Heart left ventricle (tissue), 16 donors: ENCODE measurements at regions of chr1 and their contacts with region 1.

Region 1: GRCh38 chr1:42335050-42335808 is at the start of gene FOXJ3:
- DNase-seq: peak; percentile 94 to 97 (median 95)
- ATAC-seq: peak; percentile 74 to 96 (median 91)
- H3K4me3 ChIP-seq: peak within 1 kb of the TSS; percentile 72 to 99 (median 94)
- H3K27ac ChIP-seq: peak within 1 kb of the TSS; percentile 83 to 98 (median 95)
- H3K4me1 ChIP-seq: peaks cover 3 to 57% (median 30%) of the 10 kb centered on the region in 12 donors
- H3K27me3 ChIP-seq: no peaks in the 10 kb centered on the region
- CTCF ChIP-seq: no peak
- POLR2A ChIP-seq: peak in 1 of 2 donors; percentile 61
- total RNA-seq, gene FOXJ3: 33.4 to 48.8 (median 42.3) TPM

Region 2: DNA sequence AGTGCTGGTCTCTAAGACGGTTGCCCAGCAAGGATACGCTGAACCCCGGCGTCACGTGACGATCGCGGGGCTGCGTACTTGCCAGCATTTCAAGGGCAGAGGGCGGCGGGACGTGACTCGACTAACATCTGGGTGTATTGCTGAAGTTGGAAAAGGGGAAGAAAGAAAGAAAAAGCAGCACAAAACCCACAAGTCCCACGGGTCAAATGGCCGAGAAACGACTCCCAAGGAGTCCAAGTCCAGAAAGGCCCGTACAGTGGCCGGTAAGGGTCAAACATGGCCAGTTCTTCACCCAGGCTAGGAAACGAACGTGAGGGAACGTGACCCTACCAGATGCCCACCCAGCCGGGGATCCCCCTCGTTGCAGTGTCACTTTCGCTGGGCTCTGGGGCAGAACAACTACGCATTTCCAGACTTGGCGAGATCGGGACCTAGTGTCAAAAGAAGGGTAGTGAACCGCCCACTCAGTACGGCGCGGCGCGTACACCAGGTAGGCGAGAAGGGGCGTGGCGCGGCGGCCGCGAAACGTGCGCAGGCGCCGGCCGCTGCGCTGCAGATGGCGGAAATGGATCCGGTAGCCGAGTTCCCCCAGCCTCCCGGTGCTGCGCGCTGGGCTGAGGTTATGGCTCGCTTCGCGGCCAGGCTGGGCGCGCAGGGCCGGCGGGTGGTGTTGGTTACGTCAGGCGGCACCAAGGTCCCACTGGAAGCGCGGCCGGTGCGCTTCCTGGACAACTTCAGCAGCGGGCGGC is 121.0 kb after region 1 on chr1 and contains the starts of genes PPCS and ZMYND12:
- intact Hi-C with region 1: loop called in 7 of 10 experiments (anchors 2 to 10 kb)
- DNase-seq: peak; percentile 88 to 92 (median 91)
- ATAC-seq: peak; percentile 94 to 97 (median 96)
- H3K4me3 ChIP-seq: peak within 1 kb of the TSS; percentile 63 to 100 (median 84)
- H3K27ac ChIP-seq: peak within 1 kb of the TSS; percentile 83 to 99 (median 90)
- H3K4me1 ChIP-seq: peaks cover 0 to 25% (median 15%) of the 10 kb centered on the region in 12 donors
- H3K27me3 ChIP-seq: no peaks in the 10 kb centered on the region
- CTCF ChIP-seq: peak in 2 of 12 donors; percentile 5 to 13
- POLR2A ChIP-seq: peak in 1 of 2 donors; percentile 58
- total RNA-seq, gene PPCS: 34.3 to 47.5 (median 37.0) TPM
- total RNA-seq, gene ZMYND12: 0.49 to 3.5 (median 2.3) TPM

Region 3: GRCh38 chr1:42681741-42682483 is 346.7 kb after region 1 on chr1 and contains the start of gene YBX1:
- intact Hi-C with region 1: loop called in 4 of 10 experiments (anchors 5 to 10 kb)
- DNase-seq: peak; percentile 96 to 97 (median 97)
- ATAC-seq: peak; percentile 97 to 99 (median 98)
- H3K4me3 ChIP-seq: peak within 1 kb of the TSS; percentile 64 to 99 (median 85)
- H3K27ac ChIP-seq: peak within 1 kb of the TSS; percentile 86 to 100 (median 96)
- H3K4me1 ChIP-seq: peaks cover 21 to 58% (median 44%) of the 10 kb centered on the region in 12 donors
- H3K27me3 ChIP-seq: no peaks in the 10 kb centered on the region
- CTCF ChIP-seq: no peak
- POLR2A ChIP-seq: peak in 1 of 2 donors; percentile 84
- total RNA-seq, gene YBX1: 663 to 1,139 (median 788) TPM

Region 4: DNA sequence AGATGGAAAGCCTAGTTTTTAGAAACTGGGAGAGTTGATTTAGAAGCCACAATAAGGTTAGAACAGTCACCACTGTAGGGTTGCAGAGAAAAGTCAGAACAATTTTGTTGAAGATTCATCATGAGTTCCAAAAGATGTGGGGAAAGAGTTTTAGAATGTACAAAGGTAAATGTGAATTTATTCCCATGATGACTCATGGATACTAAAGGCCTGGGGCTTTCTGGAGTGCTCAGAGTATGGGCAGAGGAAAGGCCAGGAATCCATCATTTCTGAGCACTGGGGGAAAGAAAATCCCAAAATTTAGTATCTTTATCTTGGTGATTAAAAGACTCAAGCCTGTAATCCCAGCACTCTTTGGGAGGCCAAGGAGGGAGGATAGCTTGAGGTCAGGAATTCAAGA is 364.8 kb after region 1 on chr1:
- intact Hi-C with region 1: no loop called
- DNase-seq: no peak
- ATAC-seq: no peak
- H3K4me3 ChIP-seq: no peak overlapping the region
- H3K27ac ChIP-seq: no peak overlapping the region
- H3K4me1 ChIP-seq: no peaks in the 10 kb centered on the region
- H3K27me3 ChIP-seq: no peaks in the 10 kb centered on the region
- CTCF ChIP-seq: no peak
- POLR2A ChIP-seq: no peak

Region 5: GRCh38 chr1:42756956-42757891 is 422.0 kb after region 1 on chr1:
- intact Hi-C with region 1: loop called in 3 of 10 experiments (anchors 10 kb)
- DNase-seq: no peak
- ATAC-seq: peak in 3 of 4 donors; percentile 59 to 63 (median 60)
- H3K4me3 ChIP-seq: no peak overlapping the region
- H3K27ac ChIP-seq: no peak overlapping the region
- H3K4me1 ChIP-seq: peaks cover 0 to 4% (median 0%) of the 10 kb centered on the region in 12 donors
- H3K27me3 ChIP-seq: no peaks in the 10 kb centered on the region
- CTCF ChIP-seq: peak; percentile 52 to 73 (median 57)
- POLR2A ChIP-seq: no peak